ENCODE measurements at regions of chr6 and their contacts with region 1.

Region 1: GRCh38 chr6:106883808-106884262 is 90.7 kb downstream of the CD24 start:
- DNase-seq: no peak
- ATAC-seq: peak; percentile 62; the same call in 1 of the 2 replicates
- H3K4me3 ChIP-seq: no peak overlapping the region
- H3K27ac ChIP-seq: no peak overlapping the region
- H3K4me1 ChIP-seq: no peaks in the 10 kb centered on the region
- H3K27me3 ChIP-seq: no peaks in the 10 kb centered on the region
- CTCF ChIP-seq: peak; percentile 64

Region 2: GRCh38 chr6:106600329-106600728 is 283.5 kb before region 1 on chr6:
- CTCF ChIA-PET with region 1: no interaction called
- POLR2A ChIA-PET with region 1: no interaction called
- in situ Hi-C with region 1: no loop called
- intact Hi-C with region 1: no loop called
- DNase-seq: no peak
- ATAC-seq: no peak
- H3K4me3 ChIP-seq: no peak overlapping the region
- H3K27ac ChIP-seq: no peak overlapping the region
- H3K4me1 ChIP-seq: no peaks in the 10 kb centered on the region
- H3K27me3 ChIP-seq: no peaks in the 10 kb centered on the region
- CTCF ChIP-seq: no peak

Region 3: GRCh38 chr6:106670236-106670635 is 213.6 kb before region 1 on chr6:
- CTCF ChIA-PET with region 1: no interaction called
- POLR2A ChIA-PET with region 1: interaction called, 10 read pairs
- in situ Hi-C with region 1: no loop called
- intact Hi-C with region 1: no loop called
- DNase-seq: no peak
- ATAC-seq: no peak
- H3K4me3 ChIP-seq: no peak overlapping the region
- H3K27ac ChIP-seq: no peak overlapping the region
- H3K4me1 ChIP-seq: no peaks in the 10 kb centered on the region
- H3K27me3 ChIP-seq: no peaks in the 10 kb centered on the region
- CTCF ChIP-seq: no peak

Measured in Panc1 (cell line).